ENCODE measurements at regions of chr7 and their contacts with region 1.

Region 1: GRCh38 chr7:28853834-28854749 is 104.0 kb downstream of the TRIL start:
- DNase-seq: peak; percentile 76
- H3K4me3 Mint-ChIP-seq: peak overlapping the region; percentile 45
- H3K27ac Mint-ChIP-seq: no peak overlapping the region
- H3K4me1 Mint-ChIP-seq: peaks cover 11% of the 10 kb centered on the region
- H3K27me3 Mint-ChIP-seq: peaks cover 47% of the 10 kb centered on the region

Region 2: DNA sequence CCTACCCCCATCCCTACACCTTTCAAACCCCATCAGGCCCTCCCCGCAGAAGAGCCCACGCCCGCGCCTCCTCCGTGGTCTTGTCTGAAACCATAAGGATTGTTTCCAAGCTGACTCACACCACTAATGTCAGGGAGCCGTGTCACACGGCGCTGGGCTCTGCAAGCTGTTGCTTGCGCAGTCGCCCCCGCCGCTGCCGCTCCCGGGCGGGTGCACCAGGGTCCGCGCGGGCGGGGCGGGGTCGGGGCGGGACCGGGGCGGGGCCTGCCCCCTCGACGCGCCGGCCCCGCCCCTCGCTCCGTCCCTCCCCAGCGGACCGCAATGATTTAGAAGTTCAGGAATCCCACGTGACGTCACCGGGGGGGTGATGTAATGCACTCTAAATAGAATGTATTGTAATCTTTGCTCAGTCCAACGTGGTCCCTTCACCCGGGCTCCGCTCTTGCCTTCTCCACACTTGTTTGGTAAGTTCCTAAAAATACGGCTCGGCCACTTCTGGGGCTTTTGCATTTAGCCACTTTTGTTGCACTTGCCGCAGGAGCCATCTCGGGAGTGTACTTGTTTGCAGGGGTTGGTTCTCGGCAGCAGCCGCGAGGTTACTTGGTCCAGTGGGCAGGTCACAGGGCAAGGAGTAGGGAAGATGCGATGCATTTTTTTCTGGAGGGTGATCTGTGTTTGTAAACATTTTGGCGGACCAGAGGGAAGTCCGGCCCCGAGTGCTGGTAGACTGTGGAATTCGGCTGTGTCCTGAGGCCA is 445.0 kb before region 1 on chr7:
- CTCF ChIA-PET with region 1: no interaction called
- intact Hi-C with region 1: loop called (anchors 2 kb)
- DNase-seq: peak; percentile 88
- H3K4me3 Mint-ChIP-seq: peak overlapping the region; percentile 80
- H3K27ac Mint-ChIP-seq: no peak overlapping the region
- H3K4me1 Mint-ChIP-seq: peaks cover 39% of the 10 kb centered on the region
- H3K27me3 Mint-ChIP-seq: peaks cover 67% of the 10 kb centered on the region